Endothelial cell of umbilical vein (primary cell): ENCODE measurements at regions of chr3 and their contacts with region 1.

Region 1: GRCh38 chr3:31166249-31166885 is 271.9 kb upstream of the GADL1 start:
- DNase-seq: peak; percentile 91
- H3K4me3 ChIP-seq: peak overlapping the region in 1 of 3 experiments; percentile 19
- H3K27ac ChIP-seq: peak overlapping the region; percentile 87
- H3K4me1 ChIP-seq: peaks cover 32% of the 10 kb centered on the region
- H3K27me3 ChIP-seq: no peaks in the 10 kb centered on the region
- CTCF ChIP-seq: no peak
- POLR2A ChIP-seq: peak; percentile 17

Region 2: DNA sequence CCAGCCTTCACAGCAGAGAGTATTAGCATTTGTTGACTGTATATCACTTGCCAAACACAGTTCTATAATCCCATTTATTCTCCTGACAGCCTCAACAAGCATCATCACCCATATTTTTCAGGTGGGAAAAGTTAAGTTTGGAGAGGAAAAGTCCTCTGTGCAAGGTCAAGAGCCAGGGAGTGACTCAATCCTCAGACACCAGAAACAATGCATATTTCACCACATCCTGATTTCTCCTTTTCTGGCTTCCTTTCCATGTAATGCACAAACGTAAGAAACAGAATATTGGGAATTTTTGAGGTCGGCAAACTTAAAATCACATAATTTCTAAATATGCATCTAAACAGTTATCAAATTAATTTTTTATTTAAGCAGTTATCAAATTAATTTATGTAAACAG is 155.9 kb before region 1 on chr3:
- CTCF ChIA-PET with region 1: no interaction called
- POLR2A ChIA-PET with region 1: no interaction called
- dilution Hi-C with region 1: no loop called
- intact Hi-C with region 1: loop called (anchors 2 kb)
- DNase-seq: peak; percentile 77
- H3K4me3 ChIP-seq: no peak overlapping the region
- H3K27ac ChIP-seq: peak overlapping the region; percentile 70
- H3K4me1 ChIP-seq: peaks cover 42% of the 10 kb centered on the region
- H3K27me3 ChIP-seq: no peaks in the 10 kb centered on the region
- CTCF ChIP-seq: no peak
- POLR2A ChIP-seq: no peak

Region 3: GRCh38 chr3:31265646-31266428 is 99.5 kb after region 1 on chr3:
- CTCF ChIA-PET with region 1: no interaction called
- POLR2A ChIA-PET with region 1: no interaction called
- dilution Hi-C with region 1: no loop called
- intact Hi-C with region 1: loop called (anchors 1 kb)
- DNase-seq: peak; percentile 87
- H3K4me3 ChIP-seq: no peak overlapping the region
- H3K27ac ChIP-seq: peak overlapping the region; percentile 93
- H3K4me1 ChIP-seq: peaks cover 17% of the 10 kb centered on the region
- H3K27me3 ChIP-seq: no peaks in the 10 kb centered on the region
- CTCF ChIP-seq: no peak
- POLR2A ChIP-seq: no peak